ENCODE measurements at regions of chr1 and their contacts with region 1.

Region 1: GRCh38 chr1:226634166-226634588 is 85.6 kb downstream of the STUM start:
- DNase-seq: peak; percentile 54 to 75
- H3K4me3 ChIP-seq: no peak overlapping the region
- H3K27ac ChIP-seq: peak overlapping the region in 1 of 2 donors; percentile 36
- H3K4me1 ChIP-seq: peaks cover 0 to 4% of the 10 kb centered on the region in 2 donors
- H3K27me3 ChIP-seq: no peaks in the 10 kb centered on the region
- CTCF ChIP-seq: peak; percentile 80 to 93 (median 91)
- POLR2A ChIP-seq: no peak

Region 2: DNA sequence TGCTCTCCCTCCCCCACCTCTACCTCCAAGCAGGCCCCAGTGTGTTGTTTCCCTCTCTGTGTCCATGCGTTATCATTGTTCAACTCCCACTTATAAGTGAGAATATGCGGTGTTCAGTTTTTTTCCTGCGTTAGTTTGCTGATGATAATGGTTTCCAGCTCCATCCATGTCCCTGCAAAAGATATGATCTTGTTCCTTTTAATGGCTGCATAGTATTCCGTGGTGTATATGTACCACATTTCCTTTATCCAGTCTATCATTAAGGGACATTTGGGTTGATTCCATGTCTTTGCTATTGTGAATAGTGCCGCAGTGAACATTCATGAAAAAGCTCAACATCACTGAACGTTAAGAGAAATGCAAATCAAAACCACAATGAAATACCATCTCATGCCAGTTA is 1646.1 kb before region 1 on chr1:
- intact Hi-C with region 1: no loop called
- DNase-seq: no peak
- H3K4me3 ChIP-seq: no peak overlapping the region
- H3K27ac ChIP-seq: no peak overlapping the region
- H3K4me1 ChIP-seq: no peaks in the 10 kb centered on the region
- H3K27me3 ChIP-seq: no peaks in the 10 kb centered on the region
- CTCF ChIP-seq: no peak
- POLR2A ChIP-seq: no peak

Region 3: DNA sequence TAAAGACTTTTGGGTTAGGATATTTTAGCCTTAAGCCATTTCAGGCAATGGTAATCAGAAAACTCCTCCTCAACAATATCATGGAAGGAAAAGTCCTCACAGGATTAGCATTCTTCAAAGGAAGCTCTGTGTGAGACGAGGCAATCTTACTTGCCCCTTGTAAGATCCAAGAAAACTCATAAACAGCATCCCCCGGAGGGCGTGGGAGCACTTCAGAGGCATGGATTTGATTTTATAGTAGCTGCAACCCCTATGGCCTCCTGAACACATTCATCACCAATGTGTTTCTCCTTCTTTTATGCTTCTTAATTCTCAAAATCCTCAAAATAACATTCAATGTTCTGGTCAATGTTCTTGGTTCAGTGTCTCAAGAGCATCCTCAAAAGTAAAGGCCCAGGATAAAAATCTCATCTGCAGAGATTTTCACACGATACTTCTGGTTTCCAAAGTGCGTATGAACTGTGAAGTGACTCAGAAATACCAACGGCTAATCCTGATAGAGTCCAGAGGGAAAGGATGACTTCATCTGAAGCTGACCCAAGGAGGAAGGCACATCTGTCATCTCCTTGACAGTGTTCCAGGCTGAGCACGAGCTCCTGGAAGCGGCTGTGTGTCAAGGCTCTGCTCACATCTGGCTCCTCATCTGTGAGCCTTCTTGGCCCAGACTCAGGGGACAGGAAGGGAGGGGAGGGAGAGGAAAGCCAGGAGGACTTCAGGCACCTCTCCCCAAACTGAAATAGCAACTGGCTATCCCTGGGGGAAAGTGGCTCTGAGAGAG is 187.0 kb after region 1 on chr1:
- intact Hi-C with region 1: loop called (anchors 5 kb)
- DNase-seq: peak in 1 of 2 donors; percentile 74
- H3K4me3 ChIP-seq: no peak overlapping the region
- H3K27ac ChIP-seq: peak overlapping the region; percentile 74 to 92
- H3K4me1 ChIP-seq: peaks cover 0 to 4% of the 10 kb centered on the region in 2 donors
- H3K27me3 ChIP-seq: no peaks in the 10 kb centered on the region
- CTCF ChIP-seq: no peak
- POLR2A ChIP-seq: no peak

Region 4: DNA sequence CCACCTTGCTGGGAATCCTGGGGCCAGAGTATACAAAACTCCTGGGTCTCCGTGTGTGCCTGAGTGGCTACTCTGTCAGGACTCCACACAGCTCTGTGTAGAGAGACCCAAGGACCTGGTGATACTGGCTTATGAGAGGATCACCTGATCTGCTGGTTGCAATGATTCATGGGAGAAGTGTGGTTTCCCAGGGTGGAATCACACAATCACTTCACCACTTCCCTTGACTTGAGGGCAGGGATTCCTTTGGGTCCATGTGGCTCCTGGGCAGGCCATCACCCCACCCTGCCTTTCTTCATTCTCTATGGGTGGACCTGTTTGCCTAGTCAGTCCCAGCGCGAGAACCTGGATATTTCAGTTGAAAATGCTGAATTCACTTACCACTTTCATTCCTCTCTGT is 1194.6 kb after region 1 on chr1:
- intact Hi-C with region 1: no loop called
- DNase-seq: no peak
- H3K4me3 ChIP-seq: no peak overlapping the region
- H3K27ac ChIP-seq: no peak overlapping the region
- H3K4me1 ChIP-seq: no peaks in the 10 kb centered on the region
- H3K27me3 ChIP-seq: no peaks in the 10 kb centered on the region
- CTCF ChIP-seq: no peak
- POLR2A ChIP-seq: no peak

Measured in breast epithelium (tissue), 4 donors.